Heart left ventricle (tissue), 16 donors: ENCODE measurements at regions of chr19 and their contacts with region 1.

Region 1: DNA sequence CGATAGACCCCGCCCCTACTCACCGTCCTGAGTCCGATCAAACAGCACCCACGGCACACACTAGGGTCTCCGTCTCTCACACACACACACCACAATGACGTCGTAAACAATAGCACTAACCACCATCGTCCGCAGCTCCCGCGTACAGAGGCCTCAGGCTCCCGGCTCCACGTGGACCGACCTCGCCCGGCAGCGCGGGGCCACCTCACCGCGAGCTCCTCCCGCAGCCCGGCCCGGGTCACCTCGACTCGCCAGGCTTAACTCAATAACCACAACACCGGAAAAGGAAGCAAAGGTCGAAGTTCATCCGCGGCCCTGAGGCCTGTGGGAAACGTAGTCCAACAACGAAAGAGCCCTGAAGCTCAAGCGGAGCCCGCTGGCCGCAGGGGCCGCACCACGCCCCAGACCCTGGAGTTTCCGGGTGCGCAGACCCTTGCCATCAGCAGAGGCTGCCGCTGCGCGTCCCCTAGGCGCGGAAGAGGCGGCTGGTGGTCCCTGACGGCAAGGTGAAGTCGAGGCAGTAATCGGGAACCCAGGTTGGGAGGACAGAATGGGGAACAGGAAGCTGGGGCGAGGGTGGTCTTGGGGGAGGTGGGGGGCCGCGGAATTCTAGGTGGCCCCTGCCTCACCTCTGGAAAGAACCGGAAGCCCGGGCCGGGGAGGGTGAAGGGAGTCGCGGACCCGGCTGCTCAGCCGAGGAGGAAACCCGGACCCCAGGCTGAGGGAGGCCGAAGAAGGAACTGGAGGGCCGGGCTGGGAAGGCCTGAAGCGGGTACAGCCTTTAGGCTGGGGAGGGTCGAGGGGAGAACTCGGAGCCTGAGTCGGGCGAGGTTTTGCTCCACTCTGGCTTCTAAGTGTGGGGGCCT is at the start of gene ZNF529:
- DNase-seq: peak; percentile 90 to 92 (median 91)
- ATAC-seq: peak; percentile 94 to 99 (median 99)
- H3K4me3 ChIP-seq: peak within 1 kb of the TSS; percentile 55 to 93 (median 79)
- H3K27ac ChIP-seq: peak within 1 kb of the TSS; percentile 42 to 90 (median 86)
- H3K4me1 ChIP-seq: peaks cover 0 to 27% (median 20%) of the 10 kb centered on the region in 12 donors
- H3K27me3 ChIP-seq: no peaks in the 10 kb centered on the region
- CTCF ChIP-seq: no peak
- POLR2A ChIP-seq: peak; percentile 62 to 82
- total RNA-seq, gene ZNF529: 10.0 to 17.8 (median 13.5) TPM

Region 2: GRCh38 chr19:36489118-36489919 is 83.9 kb before region 1 on chr19 and contains the start of gene ZNF566:
- intact Hi-C with region 1: no loop called
- DNase-seq: peak; percentile 91 to 94 (median 92)
- ATAC-seq: peak; percentile 96 to 98 (median 98)
- H3K4me3 ChIP-seq: peak within 1 kb of the TSS; percentile 62 to 94 (median 82)
- H3K27ac ChIP-seq: peak within 1 kb of the TSS; percentile 89 to 99 (median 97)
- H3K4me1 ChIP-seq: peaks cover 0 to 21% (median 10%) of the 10 kb centered on the region in 12 donors
- H3K27me3 ChIP-seq: no peaks in the 10 kb centered on the region
- CTCF ChIP-seq: peak in 2 of 12 donors; percentile 10 to 27
- POLR2A ChIP-seq: peak in 1 of 2 donors; percentile 49
- total RNA-seq, gene ZNF566: 6.6 to 14.0 (median 8.4) TPM

Region 3: GRCh38 chr19:36501973-36502372 is 71.3 kb before region 1 on chr19:
- intact Hi-C with region 1: no loop called
- DNase-seq: no peak
- ATAC-seq: no peak
- H3K4me3 ChIP-seq: no peak overlapping the region
- H3K27ac ChIP-seq: no peak overlapping the region
- H3K4me1 ChIP-seq: no peaks in the 10 kb centered on the region
- H3K27me3 ChIP-seq: no peaks in the 10 kb centered on the region
- CTCF ChIP-seq: no peak
- POLR2A ChIP-seq: no peak

Region 4: GRCh38 chr19:36514012-36514612 is 59.1 kb before region 1 on chr19:
- intact Hi-C with region 1: no loop called
- DNase-seq: no peak
- ATAC-seq: no peak
- H3K4me3 ChIP-seq: no peak overlapping the region
- H3K27ac ChIP-seq: no peak overlapping the region
- H3K4me1 ChIP-seq: no peaks in the 10 kb centered on the region
- H3K27me3 ChIP-seq: no peaks in the 10 kb centered on the region
- CTCF ChIP-seq: no peak
- POLR2A ChIP-seq: no peak

Region 5: DNA sequence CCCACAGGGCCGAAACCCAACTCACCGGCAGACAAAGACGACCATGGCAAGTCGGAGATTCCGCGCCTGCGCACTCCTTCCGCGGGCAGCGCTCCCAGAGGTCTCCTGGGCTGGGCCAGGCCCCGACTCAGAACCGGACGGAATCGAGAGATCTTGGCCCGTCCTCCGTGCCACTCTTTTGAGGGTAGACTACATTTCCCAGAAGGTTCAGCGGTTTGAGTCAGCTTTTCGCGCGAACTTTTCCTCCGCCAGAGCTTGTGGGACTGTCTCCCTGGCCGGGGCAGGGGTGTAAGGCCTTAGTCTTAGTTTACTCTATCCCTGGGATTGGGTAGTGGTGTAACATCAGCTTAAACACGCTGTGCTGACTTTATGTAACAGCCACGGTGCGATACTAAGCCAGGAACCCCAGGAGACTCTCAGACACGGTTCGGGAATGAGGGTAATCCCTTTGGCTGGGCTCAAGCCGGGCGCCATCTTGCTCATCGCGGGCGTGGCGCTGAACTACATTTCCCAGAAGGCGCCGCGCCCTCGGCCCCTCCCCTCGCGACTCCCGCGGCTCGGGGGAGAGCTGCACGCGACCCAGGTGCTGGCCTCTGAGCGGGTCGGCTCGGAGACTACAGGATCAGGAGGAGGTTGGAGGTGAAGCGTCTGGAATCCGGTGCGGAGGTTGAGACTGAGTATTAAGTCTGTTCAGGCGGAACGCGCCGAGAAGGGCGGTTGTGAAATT is 44.9 kb before region 1 on chr19 and contains the start of gene ZNF260:
- intact Hi-C with region 1: loop called in 2 of 10 experiments (anchors 5 kb)
- DNase-seq: peak; percentile 97 to 99 (median 98)
- ATAC-seq: peak; percentile 99
- H3K4me3 ChIP-seq: peak within 1 kb of the TSS; percentile 40 to 89 (median 74)
- H3K27ac ChIP-seq: peak within 1 kb of the TSS; percentile 73 to 99 (median 94)
- H3K4me1 ChIP-seq: peaks cover 0 to 26% (median 15%) of the 10 kb centered on the region in 12 donors
- H3K27me3 ChIP-seq: no peaks in the 10 kb centered on the region
- CTCF ChIP-seq: peak in 3 of 12 donors; percentile 10 to 19 (median 16)
- POLR2A ChIP-seq: peak in 1 of 2 donors; percentile 48
- total RNA-seq, gene ZNF260: 5.2 to 13.7 (median 8.5) TPM

Region 6: GRCh38 chr19:36646746-36647145 is 73.5 kb after region 1 on chr19:
- intact Hi-C with region 1: no loop called
- DNase-seq: no peak
- ATAC-seq: no peak
- H3K4me3 ChIP-seq: no peak overlapping the region
- H3K27ac ChIP-seq: no peak overlapping the region
- H3K4me1 ChIP-seq: no peaks in the 10 kb centered on the region
- H3K27me3 ChIP-seq: no peaks in the 10 kb centered on the region
- CTCF ChIP-seq: no peak
- POLR2A ChIP-seq: no peak